Endothelial cell of umbilical vein (primary cell): ENCODE measurements at regions of chr7 and their contacts with region 1.

Region 1: DNA sequence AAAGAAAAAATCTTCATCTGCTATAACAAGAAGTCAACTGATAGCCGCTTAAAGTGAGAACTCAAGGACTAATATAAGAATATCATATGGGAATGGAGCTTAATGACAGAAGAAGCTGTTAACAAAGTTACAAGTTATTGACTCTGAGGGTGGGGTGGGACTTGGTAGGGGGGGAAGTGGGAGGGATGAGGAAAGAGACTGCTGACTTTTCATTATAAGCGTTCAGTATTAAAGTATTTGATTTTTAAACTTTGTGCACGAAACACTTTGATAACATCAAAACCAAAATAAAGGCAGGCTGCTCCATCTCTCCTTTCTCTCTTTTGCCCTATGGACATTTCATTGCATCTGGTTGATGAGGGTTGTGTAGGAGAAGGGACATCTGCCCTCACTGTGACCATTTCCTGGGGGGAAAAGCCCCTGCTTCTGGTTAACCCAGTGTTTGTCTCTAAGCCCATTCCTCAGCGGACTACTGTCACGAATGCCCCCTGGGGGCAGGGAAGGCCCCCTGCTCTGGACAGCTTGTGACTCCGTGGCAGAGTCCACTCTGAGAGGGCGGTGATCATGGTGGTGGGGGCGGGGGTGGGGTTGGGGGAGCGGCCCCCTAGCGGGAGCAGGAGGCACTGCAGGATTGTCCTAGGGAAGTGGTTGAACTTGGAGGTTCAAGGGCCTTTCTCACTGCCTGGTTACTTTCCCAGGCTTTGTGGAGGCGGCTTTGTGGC is 17.4 kb downstream of the SLC13A4 start:
- DNase-seq: no peak
- H3K4me3 ChIP-seq: no peak overlapping the region
- H3K27ac ChIP-seq: no peak overlapping the region
- H3K4me1 ChIP-seq: peaks cover 18% of the 10 kb centered on the region
- H3K27me3 ChIP-seq: no peaks in the 10 kb centered on the region
- CTCF ChIP-seq: peak; percentile 31 to 66
- POLR2A ChIP-seq: no peak

Region 2: GRCh38 chr7:135480966-135481597 is 229.5 kb before region 1 on chr7:
- CTCF ChIA-PET with region 1: no interaction called
- POLR2A ChIA-PET with region 1: no interaction called
- dilution Hi-C with region 1: no loop called
- intact Hi-C with region 1: no loop called
- DNase-seq: peak; percentile 22
- H3K4me3 ChIP-seq: no peak overlapping the region
- H3K27ac ChIP-seq: no peak overlapping the region
- H3K4me1 ChIP-seq: no peaks in the 10 kb centered on the region
- H3K27me3 ChIP-seq: no peaks in the 10 kb centered on the region
- CTCF ChIP-seq: no peak
- POLR2A ChIP-seq: no peak

Region 3: DNA sequence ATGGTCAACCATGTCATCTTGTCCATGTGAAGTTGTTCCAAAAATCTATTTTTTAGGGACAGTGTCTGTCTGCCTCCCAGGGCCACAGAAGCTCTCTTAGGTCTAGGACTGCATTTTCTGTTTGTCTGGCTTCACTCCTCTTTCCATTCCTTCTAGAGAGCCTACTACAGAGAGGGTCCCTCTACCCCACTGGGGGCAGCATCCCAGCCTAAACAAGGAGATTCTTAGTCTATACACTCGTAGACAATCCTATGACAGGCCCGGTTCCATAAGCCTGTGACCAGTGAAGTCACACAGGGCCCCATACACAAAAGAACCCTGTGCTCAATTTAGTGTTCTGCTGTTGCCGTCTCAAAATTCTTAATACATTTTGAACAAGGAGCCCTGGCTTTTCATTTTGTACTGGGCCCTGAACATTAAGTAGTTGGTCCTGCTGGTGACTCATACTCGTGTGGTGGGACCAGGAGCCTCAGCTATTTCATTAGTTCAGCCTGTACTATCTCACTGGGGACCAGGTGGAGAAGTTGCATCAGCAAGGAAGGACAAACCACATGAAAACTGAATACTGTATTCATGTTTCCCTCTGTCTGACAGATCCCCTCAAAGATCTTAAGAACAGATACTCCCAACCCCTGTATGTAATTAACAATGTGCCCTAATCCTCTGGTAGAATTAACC is 61.5 kb after region 1 on chr7:
- CTCF ChIA-PET with region 1: no interaction called
- POLR2A ChIA-PET with region 1: no interaction called
- dilution Hi-C with region 1: no loop called
- intact Hi-C with region 1: no loop called
- DNase-seq: no peak
- H3K4me3 ChIP-seq: no peak overlapping the region
- H3K27ac ChIP-seq: no peak overlapping the region
- H3K4me1 ChIP-seq: peaks cover 7% of the 10 kb centered on the region
- H3K27me3 ChIP-seq: peaks cover 0 to 3% of the 10 kb centered on the region in 2 experiments
- CTCF ChIP-seq: no peak
- POLR2A ChIP-seq: no peak

Region 4: GRCh38 chr7:135795846-135796570 is 85.4 kb after region 1 on chr7:
- CTCF ChIA-PET with region 1: no interaction called
- POLR2A ChIA-PET with region 1: no interaction called
- dilution Hi-C with region 1: no loop called
- intact Hi-C with region 1: loop called (anchors 5 kb)
- DNase-seq: no peak
- H3K4me3 ChIP-seq: no peak overlapping the region
- H3K27ac ChIP-seq: no peak overlapping the region
- H3K4me1 ChIP-seq: no peaks in the 10 kb centered on the region
- H3K27me3 ChIP-seq: peaks cover 0 to 3% of the 10 kb centered on the region in 2 experiments
- CTCF ChIP-seq: no peak
- POLR2A ChIP-seq: no peak